ENCODE measurements at regions of chr11 and their contacts with region 1.

Region 1: DNA sequence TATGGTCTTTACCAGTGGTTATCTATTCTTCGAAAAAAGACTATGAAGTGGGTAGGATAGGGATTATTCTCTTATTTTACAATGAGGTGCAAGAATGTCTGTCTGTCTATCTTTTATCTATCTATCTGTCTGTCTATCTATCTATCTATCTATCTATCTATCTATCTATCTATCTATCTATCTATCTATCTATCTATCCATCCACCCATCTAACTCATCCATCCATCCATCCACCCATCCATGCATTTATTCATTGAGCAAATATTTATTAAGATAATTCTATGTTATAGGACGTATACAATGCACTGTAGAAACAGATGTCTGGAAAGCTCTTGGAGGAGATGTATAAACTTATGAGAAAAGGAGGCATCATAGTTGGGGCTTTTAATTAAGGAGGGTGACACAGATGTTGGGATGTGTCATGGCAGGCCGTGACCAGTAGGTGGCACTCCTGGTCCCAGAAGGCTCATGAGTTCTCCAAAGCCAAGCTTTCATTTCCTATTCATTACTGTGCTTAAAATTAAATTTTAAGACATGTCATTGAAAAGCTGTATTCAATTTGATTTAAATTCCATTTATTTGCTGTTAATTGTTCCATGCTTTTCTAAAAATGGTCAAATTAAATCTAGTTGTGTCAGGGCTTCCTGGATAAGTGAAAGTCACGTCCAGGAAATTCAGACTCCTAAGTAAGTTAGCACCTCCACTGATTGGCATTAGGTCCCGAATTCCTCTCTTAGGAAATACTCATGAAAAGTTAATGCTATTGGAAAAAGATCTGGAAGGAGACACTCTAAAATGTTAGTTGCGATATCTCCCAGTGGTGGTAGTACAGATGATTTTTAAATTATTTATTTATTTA is 19.0 kb upstream of the E2F8 start:
- DNase-seq: peak; percentile 69
- ATAC-seq: peak; percentile 88
- H3K4me3 ChIP-seq: no peak overlapping the region
- H3K4me3 Mint-ChIP-seq: no peak overlapping the region
- H3K27ac ChIP-seq: no peak overlapping the region
- H3K27ac Mint-ChIP-seq: no peak overlapping the region
- H3K4me1 ChIP-seq: no peaks in the 10 kb centered on the region
- H3K4me1 Mint-ChIP-seq: no peaks in the 10 kb centered on the region
- H3K27me3 ChIP-seq: peaks cover 0 to 2% (median 0%) of the 10 kb centered on the region in 4 experiments
- H3K27me3 Mint-ChIP-seq: peaks cover 4% of the 10 kb centered on the region
- CTCF ChIP-seq: peak; percentile 99

Region 2: GRCh38 chr11:19240420-19241259 is 19.1 kb before region 1 on chr11 and contains the start of gene E2F8:
- CTCF ChIA-PET with region 1: interaction called, 4 read pairs
- POLR2A ChIA-PET with region 1: interaction called, 3 read pairs
- intact Hi-C with region 1: loop called (anchors 2 kb)
- DNase-seq: peak; percentile 87
- ATAC-seq: peak; percentile 95
- H3K4me3 ChIP-seq: peak within 1 kb of the TSS; percentile 49 to 91 (median 66)
- H3K4me3 Mint-ChIP-seq: peak within 1 kb of the TSS; percentile 96
- H3K27ac ChIP-seq: no peak within 1 kb of the TSS
- H3K27ac Mint-ChIP-seq: peak within 1 kb of the TSS; percentile 73
- H3K4me1 ChIP-seq: peaks cover 20 to 22% of the 10 kb centered on the region in 2 donors
- H3K4me1 Mint-ChIP-seq: peaks cover 20% of the 10 kb centered on the region
- H3K27me3 ChIP-seq: peaks cover 0 to 44% (median 27%) of the 10 kb centered on the region in 4 experiments
- H3K27me3 Mint-ChIP-seq: peaks cover 37% of the 10 kb centered on the region
- CTCF ChIP-seq: no peak
- total RNA-seq, gene E2F8: 0.22 TPM in 1 of 2 replicates, not detected in the other

Region 3: DNA sequence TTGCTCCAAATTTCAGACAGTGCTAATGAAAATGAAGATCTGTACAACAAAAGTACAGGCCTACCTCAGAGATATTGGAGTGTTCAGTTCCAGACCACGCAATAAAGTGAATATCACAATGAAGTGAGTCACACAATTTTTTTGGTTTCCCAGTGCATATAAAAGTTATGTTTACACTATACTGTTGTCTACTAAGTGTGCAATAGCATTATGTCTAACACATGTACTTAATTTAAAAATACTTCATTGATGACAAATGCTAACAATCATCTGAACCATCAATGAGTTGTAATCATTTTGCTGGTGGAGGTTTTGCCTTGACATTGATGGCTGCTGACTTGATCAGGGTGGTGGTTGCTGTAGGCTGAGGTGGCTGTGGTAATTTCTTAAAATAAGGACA is 41.6 kb after region 1 on chr11:
- CTCF ChIA-PET with region 1: no interaction called
- POLR2A ChIA-PET with region 1: no interaction called
- intact Hi-C with region 1: no loop called
- DNase-seq: no peak
- ATAC-seq: no peak
- H3K4me3 ChIP-seq: no peak overlapping the region
- H3K4me3 Mint-ChIP-seq: no peak overlapping the region
- H3K27ac ChIP-seq: no peak overlapping the region
- H3K27ac Mint-ChIP-seq: no peak overlapping the region
- H3K4me1 ChIP-seq: no peaks in the 10 kb centered on the region
- H3K4me1 Mint-ChIP-seq: no peaks in the 10 kb centered on the region
- H3K27me3 ChIP-seq: no peaks in the 10 kb centered on the region
- H3K27me3 Mint-ChIP-seq: peaks cover 25% of the 10 kb centered on the region
- CTCF ChIP-seq: no peak

Region 4: DNA sequence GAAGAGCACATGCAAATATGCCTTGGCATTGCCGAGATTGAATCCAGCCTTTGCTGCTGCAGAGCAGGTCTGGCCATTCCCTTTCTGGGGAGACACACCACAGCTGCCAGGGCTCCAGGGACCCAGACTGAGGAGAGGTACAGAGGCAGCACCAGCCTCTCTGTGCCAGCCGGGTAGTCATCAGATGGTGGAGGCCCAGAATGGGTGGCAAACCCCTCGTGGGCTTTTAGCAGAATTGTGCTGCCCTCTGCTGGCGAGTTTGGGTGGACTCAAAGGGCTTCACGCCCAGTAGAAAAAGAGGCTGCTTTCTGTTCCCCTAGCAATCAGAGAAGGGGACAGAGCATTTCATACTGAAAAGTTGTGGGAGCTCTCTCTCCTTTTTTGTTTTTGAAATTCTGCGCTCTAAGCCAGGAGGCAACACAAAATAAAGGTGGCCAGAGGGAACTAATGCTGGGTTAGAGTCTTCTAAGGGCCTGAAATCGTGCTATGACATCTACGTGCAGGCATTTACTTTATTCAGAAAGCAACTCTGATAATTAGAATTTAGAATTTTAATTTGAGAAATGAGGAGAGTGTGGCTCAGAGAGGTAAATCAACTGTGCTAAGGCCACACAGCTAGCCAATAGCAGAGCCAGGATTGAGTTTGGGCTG is 294.1 kb after region 1 on chr11:
- CTCF ChIA-PET with region 1: interaction called, 40 read pairs
- POLR2A ChIA-PET with region 1: no interaction called
- intact Hi-C with region 1: no loop called
- DNase-seq: peak; percentile 68
- ATAC-seq: peak; percentile 36
- H3K4me3 ChIP-seq: no peak overlapping the region
- H3K4me3 Mint-ChIP-seq: no peak overlapping the region
- H3K27ac ChIP-seq: no peak overlapping the region
- H3K27ac Mint-ChIP-seq: no peak overlapping the region
- H3K4me1 ChIP-seq: peaks cover 0 to 4% of the 10 kb centered on the region in 2 donors
- H3K4me1 Mint-ChIP-seq: peaks cover 1% of the 10 kb centered on the region
- H3K27me3 ChIP-seq: peaks cover 0 to 7% (median 1%) of the 10 kb centered on the region in 4 experiments
- H3K27me3 Mint-ChIP-seq: peaks cover 8% of the 10 kb centered on the region
- CTCF ChIP-seq: peak; percentile 84

Measured in B cell (primary cell).